Calu3 (cell line): ENCODE measurements at regions of chr1 and their contacts with region 1.

Region 1: DNA sequence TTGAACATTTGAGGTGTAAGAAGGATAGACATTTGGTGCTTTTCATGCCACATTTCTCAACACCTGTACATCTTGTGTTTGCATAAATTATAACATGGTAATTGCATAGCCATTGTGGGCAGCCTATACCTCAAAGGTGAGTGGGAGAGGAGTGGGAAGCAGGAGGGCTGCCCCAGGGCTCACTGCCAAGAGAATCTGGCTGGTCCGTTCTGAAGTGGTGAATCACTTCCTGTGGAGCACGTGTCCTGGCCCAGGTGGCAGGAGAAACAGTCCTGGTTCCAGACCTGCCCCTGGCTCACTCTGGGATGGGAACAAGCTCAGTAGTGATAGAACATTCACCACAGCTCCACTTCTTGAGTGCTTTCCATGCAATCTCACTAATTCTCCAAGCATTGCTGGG is 11.6 kb upstream of the OLFML2B start:
- DNase-seq: peak; percentile 73
- H3K4me3 Mint-ChIP-seq: no peak overlapping the region
- H3K27ac Mint-ChIP-seq: no peak overlapping the region
- H3K4me1 Mint-ChIP-seq: no peaks in the 10 kb centered on the region
- H3K27me3 Mint-ChIP-seq: peaks cover 33% of the 10 kb centered on the region
- CTCF ChIP-seq: no peak

Region 2: DNA sequence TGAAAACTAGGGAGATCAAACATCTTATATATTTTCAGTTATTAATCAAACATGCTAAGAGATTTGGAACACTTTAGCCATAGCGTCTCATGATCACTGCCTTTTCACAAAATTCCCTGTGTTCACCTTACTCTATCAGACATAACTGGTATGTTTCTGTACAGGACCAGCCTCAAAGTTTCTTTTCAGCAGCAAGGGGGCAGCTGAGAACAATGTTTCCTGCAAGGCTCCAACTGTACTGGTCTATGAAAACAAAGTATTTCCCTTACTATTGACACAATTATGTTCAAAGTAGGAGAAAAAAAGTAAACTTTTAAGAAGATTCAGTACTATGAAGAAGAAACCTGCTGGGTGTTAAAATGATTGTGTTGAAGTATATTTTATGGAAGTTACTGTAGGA is 170.7 kb before region 1 on chr1:
- CTCF ChIA-PET with region 1: interaction called, 13 read pairs
- intact Hi-C with region 1: no loop called
- DNase-seq: no peak
- H3K4me3 Mint-ChIP-seq: no peak overlapping the region
- H3K27ac Mint-ChIP-seq: no peak overlapping the region
- H3K4me1 Mint-ChIP-seq: no peaks in the 10 kb centered on the region
- H3K27me3 Mint-ChIP-seq: no peaks in the 10 kb centered on the region
- CTCF ChIP-seq: no peak

Region 3: DNA sequence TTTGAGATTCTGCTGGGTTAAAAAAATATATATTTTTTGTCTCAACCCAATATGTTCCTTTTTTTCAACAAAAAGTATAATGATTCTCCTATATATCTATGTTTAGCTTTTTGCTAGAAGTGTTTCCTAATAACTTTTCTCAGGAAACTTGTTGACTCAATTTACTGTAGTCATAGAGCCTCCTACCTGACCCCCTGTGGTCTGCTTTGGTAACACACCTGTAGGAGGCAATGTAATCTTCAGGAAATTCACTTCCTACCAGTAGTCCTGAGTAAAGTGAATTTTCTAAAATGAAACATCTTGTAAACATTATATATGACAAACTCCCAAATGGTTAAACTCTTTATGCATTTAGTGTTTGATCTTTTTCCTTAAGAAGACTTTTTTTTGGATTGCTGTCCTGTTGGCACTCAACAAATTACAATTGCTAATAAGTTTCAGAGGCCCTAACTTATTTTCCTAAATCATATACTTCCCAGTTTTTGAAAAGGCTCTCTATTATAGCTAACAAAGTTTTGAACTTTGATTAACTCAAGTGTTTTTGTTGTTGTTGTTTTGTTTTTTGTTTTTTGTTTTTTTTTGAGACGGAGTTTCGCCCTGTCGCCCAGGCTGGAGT is 129.9 kb before region 1 on chr1:
- CTCF ChIA-PET with region 1: no interaction called
- intact Hi-C with region 1: loop called (anchors 10 kb)
- DNase-seq: peak; percentile 60
- H3K4me3 Mint-ChIP-seq: no peak overlapping the region
- H3K27ac Mint-ChIP-seq: peak overlapping the region; percentile 58
- H3K4me1 Mint-ChIP-seq: peaks cover 18% of the 10 kb centered on the region
- H3K27me3 Mint-ChIP-seq: no peaks in the 10 kb centered on the region
- CTCF ChIP-seq: peak; percentile 51

Region 4: DNA sequence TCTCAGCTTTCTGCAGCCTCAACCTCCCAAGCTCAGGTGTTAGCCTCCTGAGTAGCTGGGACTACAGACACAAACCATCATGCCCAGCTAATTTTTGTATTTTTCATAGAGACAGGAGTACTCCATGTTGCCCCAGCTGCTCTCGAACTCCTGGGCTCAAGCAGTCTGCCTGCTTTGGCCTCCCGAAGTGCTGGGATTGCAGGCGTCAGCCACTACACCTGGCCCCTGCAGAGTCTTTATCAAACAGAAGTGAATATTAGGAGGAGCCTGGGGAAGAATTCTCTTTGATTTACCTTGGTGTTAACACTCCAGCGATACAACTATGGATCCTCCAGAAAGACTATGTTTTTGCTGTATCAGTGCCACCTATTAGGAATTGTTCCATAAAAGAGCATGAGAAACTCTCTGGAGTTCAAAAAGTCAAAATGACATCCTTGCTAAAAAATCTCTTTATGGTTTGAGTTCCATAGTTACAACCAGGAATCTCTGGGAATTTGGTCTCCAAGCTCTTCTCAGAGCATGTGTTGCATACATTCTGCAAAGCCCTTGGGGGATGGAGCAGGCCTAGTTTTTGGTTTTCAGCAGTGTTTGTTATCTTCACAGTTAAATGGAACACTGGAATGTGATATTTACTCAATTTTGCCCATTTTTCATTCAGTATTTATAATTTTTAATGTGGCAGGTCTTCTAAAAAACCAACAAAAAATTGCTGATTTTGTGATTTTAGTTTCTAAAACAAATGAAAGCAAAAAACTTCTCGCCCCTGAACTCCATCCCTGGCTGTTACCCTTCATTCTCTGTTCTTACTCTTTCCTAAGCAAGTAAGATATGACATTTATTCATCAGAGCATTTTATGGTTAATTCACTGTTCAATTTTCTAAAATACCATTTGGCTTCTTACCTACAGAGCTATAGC is 88.9 kb before region 1 on chr1:
- CTCF ChIA-PET with region 1: no interaction called
- intact Hi-C with region 1: no loop called
- DNase-seq: no peak
- H3K4me3 Mint-ChIP-seq: no peak overlapping the region
- H3K27ac Mint-ChIP-seq: no peak overlapping the region
- H3K4me1 Mint-ChIP-seq: no peaks in the 10 kb centered on the region
- H3K27me3 Mint-ChIP-seq: no peaks in the 10 kb centered on the region
- CTCF ChIP-seq: no peak

Region 5: DNA sequence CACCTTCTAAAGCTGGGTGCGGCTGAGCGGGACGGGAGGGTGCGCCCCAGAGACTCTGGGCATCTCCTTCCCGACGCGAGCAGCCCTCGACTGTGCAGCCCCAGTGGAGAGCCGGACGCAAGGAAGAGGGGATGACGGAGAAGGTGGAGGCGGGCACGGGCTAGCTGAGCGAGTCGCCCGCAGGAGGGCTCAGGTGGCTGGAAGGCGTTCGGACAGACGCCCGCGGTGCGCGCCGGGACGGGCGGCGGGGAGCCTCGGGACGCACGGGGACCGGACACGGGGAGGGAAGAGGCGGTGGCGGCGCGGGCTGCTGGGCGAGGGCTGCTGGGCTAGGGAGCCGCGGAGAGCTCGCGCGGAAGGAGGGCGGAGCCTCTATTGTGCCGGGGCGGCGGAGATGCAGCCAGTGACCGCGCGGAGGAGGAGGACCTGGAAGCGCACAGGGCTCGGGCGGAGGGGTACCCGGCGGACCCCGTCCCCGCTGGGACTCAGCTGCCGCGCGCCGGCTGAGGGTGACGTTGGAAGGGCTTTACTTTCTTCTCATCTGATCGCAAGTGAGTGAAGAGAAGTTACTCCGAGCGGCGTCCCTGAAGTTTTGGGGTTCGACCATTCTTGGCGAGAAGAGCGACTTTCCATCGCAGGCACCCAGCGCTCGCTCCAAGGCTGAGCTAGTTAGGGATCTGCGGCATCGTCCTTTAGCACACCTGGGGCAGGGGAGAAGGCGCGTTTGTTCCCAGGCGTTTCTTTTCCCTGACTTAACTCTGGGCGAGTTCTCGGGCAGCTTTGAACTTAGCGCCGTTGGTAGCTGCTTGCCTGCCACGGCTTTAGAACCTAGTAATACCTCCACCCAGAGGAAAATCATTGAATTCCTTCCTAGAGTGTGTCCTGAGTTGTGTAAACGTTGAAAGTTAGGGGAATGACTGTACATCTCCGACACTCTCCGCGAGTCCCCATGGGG is 11.4 kb before region 1 on chr1 and contains the start of gene OLFML2B:
- CTCF ChIA-PET with region 1: interaction called, 15 read pairs
- intact Hi-C with region 1: no loop called
- DNase-seq: peak; percentile 66
- H3K4me3 Mint-ChIP-seq: peak within 1 kb of the TSS; percentile 97
- H3K27ac Mint-ChIP-seq: peak within 1 kb of the TSS; percentile 50
- H3K4me1 Mint-ChIP-seq: peaks cover 16% of the 10 kb centered on the region
- H3K27me3 Mint-ChIP-seq: peaks cover 70% of the 10 kb centered on the region
- CTCF ChIP-seq: no peak
- total RNA-seq, gene OLFML2B: not detected in 2 replicates